K562 (cell line): ENCODE measurements at regions of chr3 and their contacts with region 1.

Region 1: DNA sequence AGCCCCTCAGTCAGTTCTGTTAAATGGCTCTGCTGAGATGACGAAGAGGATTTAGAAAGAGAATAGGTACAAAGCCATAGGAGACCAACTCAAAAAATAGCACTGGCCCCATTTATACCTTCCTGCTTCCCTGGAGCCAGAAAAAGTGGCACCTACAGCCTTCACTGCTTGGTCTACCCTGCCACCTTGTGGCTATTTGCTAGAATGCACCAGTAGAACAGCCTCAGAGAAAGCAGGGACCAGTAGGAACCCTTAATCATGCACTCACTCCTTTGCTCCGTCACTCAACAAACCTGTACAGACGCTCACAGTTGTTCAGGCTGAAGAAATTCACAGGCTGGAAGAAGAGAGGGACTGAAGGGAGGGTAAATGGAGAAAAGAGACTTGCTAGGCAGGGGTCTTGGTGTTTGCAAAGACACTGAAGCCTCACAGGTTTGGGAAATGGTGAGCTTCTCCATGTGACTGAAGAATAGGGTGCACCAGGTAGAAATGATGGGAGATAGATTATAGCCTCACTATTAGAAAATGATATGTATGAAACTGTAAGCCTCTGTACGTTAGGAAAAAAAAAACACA is 12.1 kb upstream of the RTP2 start:
- DNase-seq: peak; percentile 66 to 76 (median 72)
- ATAC-seq: peak; percentile 92
- H3K4me3 ChIP-seq: no peak overlapping the region
- H3K27ac ChIP-seq: no peak overlapping the region
- H3K4me1 ChIP-seq: no peaks in the 10 kb centered on the region
- H3K27me3 ChIP-seq: no peaks in the 10 kb centered on the region
- CTCF ChIP-seq: peak; percentile 79 to 93 (median 81)
- EP300 ChIP-seq: no peak
- POLR2A ChIP-seq: no peak
- RAD21 ChIP-seq: peak; percentile 92

Region 2: GRCh38 chr3:187281191-187281714 is 433.2 kb before region 1 on chr3:
- CTCF ChIA-PET with region 1: no interaction called
- POLR2A ChIA-PET with region 1: no interaction called
- in situ Hi-C with region 1: no loop called
- intact Hi-C with region 1: no loop called
- DNase-seq: peak in 1 of 4 experiments; percentile 9
- ATAC-seq: peak; percentile 78
- H3K4me3 ChIP-seq: no peak overlapping the region
- H3K27ac ChIP-seq: no peak overlapping the region
- H3K4me1 ChIP-seq: no peaks in the 10 kb centered on the region; a peak in 1 of 5 replicates
- H3K27me3 ChIP-seq: peaks cover 0 to 9% of the 10 kb centered on the region in 2 experiments; a peak in 1 of 5 replicates
- CTCF ChIP-seq: 0 out of 6 replicates have a peak, but pooled peaks of 1 of the 3 experiments have one; percentile 21
- EP300 ChIP-seq: no peak
- POLR2A ChIP-seq: no peak
- RAD21 ChIP-seq: no peak

Region 3: DNA sequence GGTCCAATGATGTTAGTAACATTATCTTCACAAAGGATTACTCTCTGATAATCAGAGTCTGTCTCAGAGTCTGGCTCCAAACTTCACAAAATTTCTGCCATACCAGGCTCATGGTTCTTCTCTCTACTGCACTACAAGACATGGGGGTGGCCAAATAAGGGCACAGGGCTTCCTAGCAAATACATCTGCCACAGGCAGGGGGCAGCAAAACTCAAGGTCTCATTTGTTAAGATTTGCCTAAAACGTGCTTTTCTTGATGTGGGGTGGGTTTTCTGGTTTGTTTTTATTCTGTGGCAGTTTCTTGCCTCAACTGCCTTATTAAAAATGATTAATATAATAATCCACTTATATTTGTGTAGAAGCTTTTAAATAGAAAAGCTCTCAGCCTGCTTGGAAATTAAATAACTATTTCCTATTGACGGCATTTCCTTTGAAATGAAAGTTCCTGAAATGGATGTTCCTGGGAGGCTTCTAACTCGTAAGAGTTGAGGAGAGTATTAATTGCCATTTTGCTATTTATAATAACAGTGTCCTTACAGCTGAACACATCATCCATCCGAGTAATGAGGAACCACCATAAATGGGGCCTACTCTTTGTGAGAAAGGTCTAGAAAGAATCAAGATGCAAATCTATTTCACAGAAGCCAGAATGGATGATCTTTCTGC is 98.1 kb before region 1 on chr3:
- CTCF ChIA-PET with region 1: interaction called, 3 read pairs
- POLR2A ChIA-PET with region 1: no interaction called
- in situ Hi-C with region 1: no loop called
- intact Hi-C with region 1: loop called (anchors 1 kb)
- DNase-seq: peak; percentile 41 to 63 (median 50)
- ATAC-seq: peak; percentile 91
- H3K4me3 ChIP-seq: no peak overlapping the region
- H3K27ac ChIP-seq: no peak overlapping the region
- H3K4me1 ChIP-seq: no peaks in the 10 kb centered on the region
- H3K27me3 ChIP-seq: no peaks in the 10 kb centered on the region
- CTCF ChIP-seq: peak; percentile 58 to 75 (median 69); a peak in 5 of 6 replicates
- EP300 ChIP-seq: no peak
- POLR2A ChIP-seq: no peak
- RAD21 ChIP-seq: peak; percentile 50 to 64